Caco-2 (cell line): ENCODE measurements at regions of chr6 and their contacts with region 1.

Region 1: GRCh38 chr6:38420207-38420606 is 219.5 kb downstream of the BTBD9 start:
- DNase-seq: no peak
- H3K4me3 ChIP-seq: no peak overlapping the region
- H3K4me3 Mint-ChIP-seq: no peak overlapping the region
- H3K27ac Mint-ChIP-seq: no peak overlapping the region
- H3K4me1 ChIP-seq: no peaks in the 10 kb centered on the region
- H3K4me1 Mint-ChIP-seq: no peaks in the 10 kb centered on the region
- H3K27me3 ChIP-seq: no peaks in the 10 kb centered on the region
- H3K27me3 Mint-ChIP-seq: no peaks in the 10 kb centered on the region
- CTCF ChIP-seq: no peak

Region 2: DNA sequence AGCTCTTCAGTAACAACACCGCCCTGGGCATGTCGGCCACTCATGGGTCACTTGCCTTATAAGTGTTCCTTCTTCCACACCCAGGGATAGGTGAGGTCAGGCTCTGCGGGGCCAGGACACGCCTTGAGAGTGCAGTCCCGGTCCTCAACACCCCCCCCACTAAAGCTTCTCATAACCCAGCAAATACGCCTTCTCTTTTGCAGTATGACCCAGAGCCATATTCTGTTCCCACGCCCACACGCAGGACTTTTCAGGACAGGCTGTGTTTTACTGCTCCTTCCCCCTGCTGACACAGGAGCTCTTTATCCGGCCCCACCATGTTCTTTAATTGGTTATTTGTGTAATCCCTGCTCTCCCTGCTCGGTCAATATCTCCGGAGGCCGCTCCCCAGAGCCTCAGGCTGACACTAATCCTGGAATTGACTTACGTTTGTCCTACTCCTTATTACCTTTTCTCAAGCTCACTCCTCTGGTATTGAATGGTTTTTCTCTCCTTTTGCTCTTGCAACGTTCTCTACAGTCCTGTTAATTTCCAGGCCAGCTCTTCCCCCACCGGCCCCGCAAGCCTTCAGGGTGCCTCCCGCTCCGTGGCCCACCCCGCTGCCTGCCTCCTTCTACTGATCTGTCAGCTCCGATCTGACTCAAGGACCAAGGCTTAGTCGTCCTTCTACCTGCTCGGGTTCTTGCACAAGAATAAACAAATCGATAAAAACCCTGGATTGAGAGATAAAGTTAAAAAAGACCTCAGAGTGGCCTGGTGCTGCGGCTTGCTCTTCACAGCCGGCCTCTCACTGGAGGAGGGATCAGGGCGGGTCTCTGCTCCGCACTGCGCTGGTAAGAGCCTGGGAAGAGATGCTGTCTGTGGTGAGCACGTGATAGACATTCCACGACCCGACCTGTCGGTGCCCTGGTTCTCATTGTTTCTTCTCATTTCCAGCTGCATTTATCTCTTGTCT is 243.1 kb before region 1 on chr6:
- CTCF ChIA-PET with region 1: no interaction called
- POLR2A ChIA-PET with region 1: no interaction called
- intact Hi-C with region 1: no loop called
- DNase-seq: no peak
- H3K4me3 ChIP-seq: no peak overlapping the region
- H3K4me3 Mint-ChIP-seq: no peak overlapping the region
- H3K27ac Mint-ChIP-seq: no peak overlapping the region
- H3K4me1 ChIP-seq: no peaks in the 10 kb centered on the region
- H3K4me1 Mint-ChIP-seq: peaks cover 4% of the 10 kb centered on the region
- H3K27me3 ChIP-seq: no peaks in the 10 kb centered on the region
- H3K27me3 Mint-ChIP-seq: no peaks in the 10 kb centered on the region
- CTCF ChIP-seq: no peak

Region 3: GRCh38 chr6:38320843-38321242 is 99.4 kb before region 1 on chr6:
- CTCF ChIA-PET with region 1: no interaction called
- POLR2A ChIA-PET with region 1: no interaction called
- intact Hi-C with region 1: no loop called
- DNase-seq: no peak
- H3K4me3 ChIP-seq: no peak overlapping the region
- H3K4me3 Mint-ChIP-seq: no peak overlapping the region
- H3K27ac Mint-ChIP-seq: no peak overlapping the region
- H3K4me1 ChIP-seq: no peaks in the 10 kb centered on the region
- H3K4me1 Mint-ChIP-seq: peaks cover 6% of the 10 kb centered on the region
- H3K27me3 ChIP-seq: no peaks in the 10 kb centered on the region
- H3K27me3 Mint-ChIP-seq: no peaks in the 10 kb centered on the region
- CTCF ChIP-seq: no peak

Region 4: DNA sequence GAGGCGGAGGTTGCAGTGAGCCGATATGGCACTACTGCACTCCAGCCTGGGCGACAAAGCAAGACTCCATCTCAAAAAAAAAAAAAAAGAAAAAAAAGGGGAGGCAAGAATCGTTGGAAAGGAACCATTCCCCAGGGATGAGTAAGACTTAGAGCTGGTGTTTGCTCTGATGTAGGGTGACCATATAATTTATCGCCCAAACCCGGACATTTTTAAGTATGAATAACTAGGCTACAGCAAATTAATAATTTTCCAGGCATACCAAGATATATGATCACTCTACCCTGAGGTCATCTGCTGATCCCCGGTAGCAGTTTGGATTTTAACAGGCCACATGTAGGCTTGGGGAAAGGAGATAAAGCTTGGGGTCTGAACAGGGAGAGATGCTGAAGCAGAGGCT is 41.4 kb before region 1 on chr6:
- CTCF ChIA-PET with region 1: no interaction called
- POLR2A ChIA-PET with region 1: no interaction called
- intact Hi-C with region 1: loop called (anchors 1 kb)
- DNase-seq: no peak
- H3K4me3 ChIP-seq: no peak overlapping the region
- H3K4me3 Mint-ChIP-seq: no peak overlapping the region
- H3K27ac Mint-ChIP-seq: no peak overlapping the region
- H3K4me1 ChIP-seq: no peaks in the 10 kb centered on the region
- H3K4me1 Mint-ChIP-seq: no peaks in the 10 kb centered on the region
- H3K27me3 ChIP-seq: no peaks in the 10 kb centered on the region
- H3K27me3 Mint-ChIP-seq: no peaks in the 10 kb centered on the region
- CTCF ChIP-seq: no peak

Region 5: GRCh38 chr6:38579010-38579628 is 158.9 kb after region 1 on chr6:
- CTCF ChIA-PET with region 1: no interaction called
- POLR2A ChIA-PET with region 1: no interaction called
- intact Hi-C with region 1: no loop called
- DNase-seq: no peak
- H3K4me3 ChIP-seq: no peak overlapping the region
- H3K4me3 Mint-ChIP-seq: no peak overlapping the region
- H3K27ac Mint-ChIP-seq: no peak overlapping the region
- H3K4me1 ChIP-seq: peaks cover 5% of the 10 kb centered on the region; the same call in 1 of the 2 replicates
- H3K4me1 Mint-ChIP-seq: peaks cover 16% of the 10 kb centered on the region
- H3K27me3 ChIP-seq: no peaks in the 10 kb centered on the region
- H3K27me3 Mint-ChIP-seq: no peaks in the 10 kb centered on the region
- CTCF ChIP-seq: no peak